GM18951 (cell line): ENCODE measurements at regions of chr4 and their contacts with region 1.

Region 1: DNA sequence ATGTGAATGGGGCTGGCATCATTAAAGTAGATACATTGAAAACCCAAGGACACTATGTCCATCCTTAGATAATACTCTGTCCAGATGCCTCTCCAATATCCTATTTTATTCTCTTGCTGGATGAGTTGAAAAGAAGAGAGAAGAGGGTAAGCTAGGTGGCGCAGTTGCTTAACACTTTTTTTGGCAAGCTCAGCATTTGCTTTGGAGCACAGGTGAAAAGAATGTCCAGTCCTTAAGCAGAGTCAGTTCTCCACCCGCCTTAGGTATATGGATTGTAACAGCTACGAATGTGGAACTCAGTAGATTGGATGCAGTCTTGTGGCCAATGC is 208.4 kb downstream of the NWD2 start:
- POLR2A ChIP-seq: no peak

Region 2: GRCh38 chr4:37561803-37562207 is 108.9 kb after region 1 on chr4:
- in situ Hi-C with region 1: loop called (anchors 10 kb)
- POLR2A ChIP-seq: no peak